ENCODE measurements at regions of chr19 and their contacts with region 1.

Region 1: GRCh38 chr19:31214086-31214485 is 135.2 kb downstream of the TSHZ3 start:
- DNase-seq: peak; percentile 90
- H3K4me3 Mint-ChIP-seq: peak overlapping the region; percentile 76
- H3K27ac Mint-ChIP-seq: peak overlapping the region; percentile 91
- H3K4me1 Mint-ChIP-seq: peaks cover 33% of the 10 kb centered on the region
- H3K27me3 Mint-ChIP-seq: no peaks in the 10 kb centered on the region

Region 2: GRCh38 chr19:31110331-31110730 is 103.8 kb before region 1 on chr19:
- intact Hi-C with region 1: no loop called
- DNase-seq: no peak
- H3K4me3 Mint-ChIP-seq: no peak overlapping the region
- H3K27ac Mint-ChIP-seq: no peak overlapping the region
- H3K4me1 Mint-ChIP-seq: peaks cover 9% of the 10 kb centered on the region
- H3K27me3 Mint-ChIP-seq: peaks cover 6% of the 10 kb centered on the region

Region 3: GRCh38 chr19:31349160-31349881 is 135.2 kb after region 1 on chr19 and contains the start of gene TSHZ3:
- intact Hi-C with region 1: loop called (anchors 2 kb)
- DNase-seq: peak; percentile 40
- H3K4me3 Mint-ChIP-seq: peak within 1 kb of the TSS; percentile 89
- H3K27ac Mint-ChIP-seq: peak within 1 kb of the TSS; percentile 67
- H3K4me1 Mint-ChIP-seq: peaks cover 28% of the 10 kb centered on the region
- H3K27me3 Mint-ChIP-seq: peaks cover 54% of the 10 kb centered on the region
- total RNA-seq, gene TSHZ3: 1.5 and 2.0 TPM in 2 replicates

Region 4: DNA sequence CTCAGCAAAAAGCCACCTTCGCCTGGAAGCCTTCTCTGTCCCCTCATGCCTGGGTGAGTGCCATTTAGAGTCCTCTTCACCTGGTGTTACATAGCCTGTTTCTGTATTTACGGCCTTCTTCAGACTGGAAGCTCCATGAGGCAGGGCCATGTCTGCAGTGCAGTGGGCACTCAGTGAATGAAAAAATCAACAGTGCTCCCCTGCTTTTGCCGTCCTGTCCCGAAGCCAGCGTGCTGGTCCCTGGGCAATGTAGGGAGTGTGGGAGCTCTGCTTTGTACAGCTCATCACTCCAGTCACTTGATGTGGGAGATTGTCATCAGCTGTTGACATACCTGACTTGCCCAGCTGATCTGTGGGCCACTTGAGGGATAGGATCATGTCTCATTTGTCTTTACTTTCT is 264.2 kb after region 1 on chr19:
- intact Hi-C with region 1: no loop called
- DNase-seq: no peak
- H3K4me3 Mint-ChIP-seq: no peak overlapping the region
- H3K27ac Mint-ChIP-seq: no peak overlapping the region
- H3K4me1 Mint-ChIP-seq: no peaks in the 10 kb centered on the region
- H3K27me3 Mint-ChIP-seq: no peaks in the 10 kb centered on the region

Measured in activated T-helper 1 cell treated with anti-CD3 and anti-CD28 coated beads, Interleukin-12 subunit alpha, Interleukin-12 subunit beta, Interleukin-2, Interleukin-4 antibody, amounts not matched to agents 30 ng/mL and 10 ng/mL and 1 ng/mL, durations not matched to agents 14 hours and 24 hours and 36 hours (primary cell).